T-cell (primary cell): ENCODE measurements at regions of chr3 and their contacts with region 1.

Region 1: GRCh38 chr3:42613462-42613861 is 13.0 kb downstream of the NKTR start:
- DNase-seq: peak in 1 of 35 experiments; percentile 48
- ATAC-seq: peak in 3 of 4 experiments; percentile 47 to 59 (median 58)
- H3K4me3 ChIP-seq: no peak overlapping the region
- H3K4me3 Mint-ChIP-seq: peak overlapping the region in 1 of 3 donors; percentile 3
- H3K27ac ChIP-seq: no peak overlapping the region
- H3K27ac Mint-ChIP-seq: peak overlapping the region; percentile 4 to 44
- H3K4me1 ChIP-seq: peaks cover 11 to 18% of the 10 kb centered on the region in 2 experiments
- H3K4me1 Mint-ChIP-seq: peaks cover 68 to 76% (median 69%) of the 10 kb centered on the region in 3 donors
- H3K27me3 ChIP-seq: no peaks in the 10 kb centered on the region
- H3K27me3 Mint-ChIP-seq: no peaks in the 10 kb centered on the region

Region 2: DNA sequence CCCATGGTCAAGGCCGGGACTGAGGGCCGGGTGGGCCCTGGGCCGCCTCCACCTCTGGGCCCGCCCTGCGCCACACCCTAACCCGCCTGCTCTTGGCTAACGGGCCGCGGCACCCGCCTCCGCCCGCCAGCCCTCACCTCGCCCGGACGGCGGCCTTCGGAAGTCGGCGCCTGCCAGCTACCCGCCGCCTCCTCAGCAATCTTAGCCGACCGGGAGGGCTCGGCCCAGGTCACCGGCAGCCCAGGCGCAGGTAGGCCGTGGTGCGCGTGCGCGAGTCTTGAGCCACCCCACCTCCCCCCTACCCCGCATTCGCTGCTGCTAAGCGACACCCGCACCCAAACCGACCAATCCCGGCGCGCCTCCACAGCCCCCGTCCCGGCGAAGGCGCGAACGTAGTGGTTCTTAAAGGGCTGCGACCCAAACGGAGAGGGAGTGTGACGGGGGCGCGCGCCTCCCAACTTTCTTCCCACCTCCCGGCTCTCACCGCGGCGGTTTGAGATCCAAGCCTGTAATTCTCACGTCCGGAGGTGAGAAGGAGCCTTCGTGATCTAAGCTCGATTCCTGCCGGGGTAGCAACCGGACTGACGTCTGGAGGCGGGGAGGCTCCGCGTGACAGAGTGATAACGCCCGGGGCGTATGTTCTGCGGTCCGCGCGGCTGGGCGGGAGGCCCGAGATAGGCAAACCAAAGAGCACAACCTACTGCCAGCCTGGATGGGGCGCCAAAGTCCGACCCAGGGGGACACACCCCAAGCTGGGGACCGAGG is 31.6 kb before region 1 on chr3 and contains the start of gene SEC22C:
- CTCF ChIA-PET with region 1: interaction called, 7 to 12 read pairs
- POLR2A ChIA-PET with region 1: interaction called, 3 read pairs
- DNase-seq: peak; percentile 88 to 96 (median 92)
- ATAC-seq: peak; percentile 90 to 95 (median 93)
- H3K4me3 ChIP-seq: peak within 1 kb of the TSS; percentile 48 to 83
- H3K4me3 Mint-ChIP-seq: peak within 1 kb of the TSS; percentile 86 to 92 (median 88)
- H3K27ac ChIP-seq: peak within 1 kb of the TSS; percentile 93
- H3K27ac Mint-ChIP-seq: peak within 1 kb of the TSS; percentile 91 to 97
- H3K4me1 ChIP-seq: peaks cover 15 to 19% of the 10 kb centered on the region in 2 experiments
- H3K4me1 Mint-ChIP-seq: peaks cover 48 to 52% (median 50%) of the 10 kb centered on the region in 3 donors
- H3K27me3 ChIP-seq: no peaks in the 10 kb centered on the region
- H3K27me3 Mint-ChIP-seq: no peaks in the 10 kb centered on the region
- total RNA-seq, gene SEC22C: 50.1 to 71.2 (median 53.6) TPM

Region 3: GRCh38 chr3:42590989-42591756 is 22.3 kb before region 1 on chr3:
- CTCF ChIA-PET with region 1: interaction called, 4 to 6 read pairs
- POLR2A ChIA-PET with region 1: interaction called, 7 to 12 read pairs
- DNase-seq: no peak
- ATAC-seq: peak in 1 of 4 experiments; percentile 34
- H3K4me3 ChIP-seq: peak overlapping the region; percentile 65 to 75
- H3K4me3 Mint-ChIP-seq: peak overlapping the region; percentile 84 to 99 (median 94)
- H3K27ac ChIP-seq: peak overlapping the region; percentile 59
- H3K27ac Mint-ChIP-seq: peak overlapping the region; percentile 85 to 99
- H3K4me1 ChIP-seq: peaks cover 12 to 21% of the 10 kb centered on the region in 2 experiments
- H3K4me1 Mint-ChIP-seq: peaks cover 16 to 43% (median 38%) of the 10 kb centered on the region in 3 donors
- H3K27me3 ChIP-seq: no peaks in the 10 kb centered on the region
- H3K27me3 Mint-ChIP-seq: no peaks in the 10 kb centered on the region

Region 4: DNA sequence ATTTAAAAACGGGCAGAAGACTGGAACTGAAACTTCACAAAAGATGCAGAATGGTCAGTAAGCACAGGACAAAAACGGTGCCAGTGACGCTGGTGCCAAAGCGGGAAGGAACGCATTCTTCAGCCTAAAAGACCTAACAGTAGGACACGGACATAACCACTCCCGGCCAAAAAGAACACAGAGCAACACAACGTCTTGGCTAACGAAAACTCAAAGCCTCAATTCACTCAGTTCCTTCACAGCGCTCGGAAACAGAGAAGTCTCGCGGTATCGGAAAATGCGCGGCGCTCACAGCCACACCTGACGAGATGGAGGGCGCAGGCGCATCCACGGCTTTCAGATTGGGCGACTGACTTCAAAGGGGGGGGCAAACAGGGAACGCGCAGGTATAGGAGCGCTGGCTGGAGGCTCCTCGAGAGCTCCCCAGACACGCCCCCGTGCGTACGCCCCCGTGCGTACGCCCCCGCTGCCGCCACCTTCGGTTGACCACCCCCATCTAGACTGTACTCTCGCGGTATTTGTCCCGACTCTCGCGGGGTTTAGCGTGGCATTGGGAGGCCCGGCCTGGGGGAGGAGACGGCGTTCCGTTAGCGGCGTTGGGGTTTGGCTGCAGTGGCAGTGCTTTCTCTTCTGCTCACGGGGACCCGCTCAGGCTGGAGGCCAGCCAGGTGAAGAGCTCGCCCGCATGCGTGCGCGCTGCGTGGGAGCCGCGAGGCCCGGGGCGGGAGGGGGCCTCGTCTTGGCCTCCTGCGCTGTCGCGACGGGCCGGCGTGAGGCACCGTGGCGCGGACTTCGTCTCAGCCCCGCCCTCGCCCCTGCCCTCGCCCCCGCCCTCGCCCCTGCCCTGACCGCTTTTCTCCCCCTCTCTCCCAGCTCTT is 13.1 kb before region 1 on chr3 and contains the start of gene NKTR:
- CTCF ChIA-PET with region 1: interaction called, 9 to 12 read pairs
- POLR2A ChIA-PET with region 1: interaction called, 3 to 4 read pairs
- DNase-seq: peak; percentile 98 to 100 (median 99)
- ATAC-seq: peak; percentile 90 to 98 (median 92)
- H3K4me3 ChIP-seq: peak within 1 kb of the TSS; percentile 86 to 95
- H3K4me3 Mint-ChIP-seq: peak within 1 kb of the TSS; percentile 93 to 95 (median 94)
- H3K27ac ChIP-seq: peak within 1 kb of the TSS; percentile 86
- H3K27ac Mint-ChIP-seq: peak within 1 kb of the TSS; percentile 96 to 99
- H3K4me1 ChIP-seq: peaks cover 13 to 19% of the 10 kb centered on the region in 2 experiments
- H3K4me1 Mint-ChIP-seq: peaks cover 37 to 45% (median 43%) of the 10 kb centered on the region in 3 donors
- H3K27me3 ChIP-seq: no peaks in the 10 kb centered on the region
- H3K27me3 Mint-ChIP-seq: no peaks in the 10 kb centered on the region
- total RNA-seq, gene NKTR: 185 to 252 (median 209) TPM

Region 5: DNA sequence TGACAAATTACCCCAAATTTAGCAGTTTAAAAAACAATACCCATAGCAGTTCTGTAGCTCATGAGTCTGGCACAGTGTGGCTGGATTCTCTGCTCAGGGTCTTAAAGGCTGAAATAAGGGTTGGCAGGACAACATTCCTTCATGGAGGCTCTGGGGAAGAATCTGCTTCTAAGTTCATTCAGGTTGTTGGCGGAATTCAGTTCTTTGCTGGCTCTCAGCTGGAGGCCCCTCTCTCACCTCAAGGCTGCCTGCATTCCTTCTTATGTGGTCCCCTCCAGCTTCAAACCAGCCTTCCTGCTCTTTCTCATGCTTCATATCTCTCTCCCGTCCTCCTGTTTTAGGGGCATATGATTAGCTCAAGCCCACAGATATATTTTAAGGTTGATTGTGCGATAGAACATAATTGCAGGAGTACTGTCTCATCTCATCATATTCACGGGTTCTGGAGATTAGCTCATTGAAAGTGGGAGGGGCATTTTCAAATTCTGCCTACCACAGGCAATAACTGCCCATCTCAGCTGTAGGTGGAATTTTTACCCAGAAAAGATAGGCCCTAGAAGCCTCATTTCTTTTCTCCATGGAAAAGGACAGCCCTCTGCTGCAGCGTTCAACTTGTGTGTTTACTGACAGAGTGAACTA is 34.5 kb after region 1 on chr3:
- CTCF ChIA-PET with region 1: no interaction called
- POLR2A ChIA-PET with region 1: no interaction called
- DNase-seq: no peak
- ATAC-seq: no peak
- H3K4me3 ChIP-seq: no peak overlapping the region
- H3K4me3 Mint-ChIP-seq: no peak overlapping the region
- H3K27ac ChIP-seq: no peak overlapping the region
- H3K27ac Mint-ChIP-seq: peak overlapping the region; percentile 2 to 41
- H3K4me1 ChIP-seq: peaks cover 0 to 6% of the 10 kb centered on the region in 2 experiments
- H3K4me1 Mint-ChIP-seq: peaks cover 7 to 22% (median 8%) of the 10 kb centered on the region in 3 donors
- H3K27me3 ChIP-seq: peaks cover 0 to 5% of the 10 kb centered on the region in 2 experiments
- H3K27me3 Mint-ChIP-seq: no peaks in the 10 kb centered on the region